Panc1 (cell line): ENCODE measurements at regions of chr6 and their contacts with region 1.

Region 1: DNA sequence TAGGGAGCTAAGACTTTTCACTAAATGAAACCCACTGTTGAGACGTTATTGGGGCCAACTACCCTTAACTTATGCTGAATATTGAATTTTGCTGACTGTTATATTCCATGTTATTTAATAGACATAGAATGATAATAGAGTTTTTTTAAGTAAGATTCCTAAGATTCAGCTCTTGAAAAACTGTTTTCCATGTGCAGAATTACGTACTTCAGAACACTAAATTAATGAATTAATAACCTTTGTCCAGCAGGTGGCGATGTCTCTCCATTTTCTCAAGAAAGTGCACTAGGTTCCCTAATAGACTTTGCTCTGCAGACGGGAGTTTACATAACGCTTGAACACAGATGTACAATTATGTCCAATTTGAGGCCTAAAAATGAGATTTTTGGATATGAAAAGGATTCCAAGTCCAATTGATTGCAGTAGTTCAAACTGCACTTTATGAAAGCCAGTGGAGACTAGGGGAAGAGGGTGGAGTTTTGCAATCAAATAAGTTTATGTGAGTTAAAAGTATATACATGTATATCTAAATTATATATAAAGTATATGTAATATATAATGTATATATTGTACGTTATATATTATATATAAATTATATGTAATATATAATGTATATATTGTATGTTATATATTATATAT is 282.1 kb downstream of the UST start:
- DNase-seq: peak; percentile 61
- ATAC-seq: peak; percentile 78
- H3K4me3 ChIP-seq: no peak overlapping the region
- H3K27ac ChIP-seq: no peak overlapping the region
- H3K4me1 ChIP-seq: peaks cover 10% of the 10 kb centered on the region
- H3K27me3 ChIP-seq: no peaks in the 10 kb centered on the region; the same call in 1 of the 2 replicates
- CTCF ChIP-seq: peak; percentile 66; the same call in 1 of the 2 replicates

Region 2: GRCh38 chr6:148789948-148790347 is 238.9 kb before region 1 on chr6:
- CTCF ChIA-PET with region 1: interaction called, 10 read pairs
- POLR2A ChIA-PET with region 1: no interaction called
- in situ Hi-C with region 1: no loop called
- intact Hi-C with region 1: no loop called
- DNase-seq: no peak
- ATAC-seq: no peak
- H3K4me3 ChIP-seq: no peak overlapping the region
- H3K27ac ChIP-seq: no peak overlapping the region
- H3K4me1 ChIP-seq: no peaks in the 10 kb centered on the region
- H3K27me3 ChIP-seq: no peaks in the 10 kb centered on the region; the same call in 1 of the 2 replicates
- CTCF ChIP-seq: no peak

Region 3: GRCh38 chr6:149153100-149153499 is 124.2 kb after region 1 on chr6:
- CTCF ChIA-PET with region 1: no interaction called
- POLR2A ChIA-PET with region 1: no interaction called
- in situ Hi-C with region 1: no loop called
- intact Hi-C with region 1: no loop called
- DNase-seq: no peak
- ATAC-seq: no peak
- H3K4me3 ChIP-seq: no peak overlapping the region
- H3K27ac ChIP-seq: no peak overlapping the region
- H3K4me1 ChIP-seq: no peaks in the 10 kb centered on the region
- H3K27me3 ChIP-seq: no peaks in the 10 kb centered on the region; the same call in 1 of the 2 replicates
- CTCF ChIP-seq: no peak

Region 4: GRCh38 chr6:149431905-149432775 is 403.3 kb after region 1 on chr6:
- CTCF ChIA-PET with region 1: interaction called, 8 read pairs
- POLR2A ChIA-PET with region 1: no interaction called
- in situ Hi-C with region 1: no loop called
- intact Hi-C with region 1: loop called (anchors 1 kb)
- DNase-seq: peak; percentile 72
- ATAC-seq: peak; percentile 98
- H3K4me3 ChIP-seq: no peak overlapping the region
- H3K27ac ChIP-seq: no peak overlapping the region
- H3K4me1 ChIP-seq: peaks cover 4% of the 10 kb centered on the region
- H3K27me3 ChIP-seq: no peaks in the 10 kb centered on the region
- CTCF ChIP-seq: peak; percentile 91

Region 5: GRCh38 chr6:149513915-149514314 is 485.0 kb after region 1 on chr6:
- CTCF ChIA-PET with region 1: no interaction called
- POLR2A ChIA-PET with region 1: no interaction called
- in situ Hi-C with region 1: no loop called
- intact Hi-C with region 1: loop called (anchors 2 kb)
- DNase-seq: no peak
- ATAC-seq: no peak
- H3K4me3 ChIP-seq: no peak overlapping the region
- H3K27ac ChIP-seq: no peak overlapping the region
- H3K4me1 ChIP-seq: no peaks in the 10 kb centered on the region
- H3K27me3 ChIP-seq: no peaks in the 10 kb centered on the region
- CTCF ChIP-seq: no peak

Region 6: DNA sequence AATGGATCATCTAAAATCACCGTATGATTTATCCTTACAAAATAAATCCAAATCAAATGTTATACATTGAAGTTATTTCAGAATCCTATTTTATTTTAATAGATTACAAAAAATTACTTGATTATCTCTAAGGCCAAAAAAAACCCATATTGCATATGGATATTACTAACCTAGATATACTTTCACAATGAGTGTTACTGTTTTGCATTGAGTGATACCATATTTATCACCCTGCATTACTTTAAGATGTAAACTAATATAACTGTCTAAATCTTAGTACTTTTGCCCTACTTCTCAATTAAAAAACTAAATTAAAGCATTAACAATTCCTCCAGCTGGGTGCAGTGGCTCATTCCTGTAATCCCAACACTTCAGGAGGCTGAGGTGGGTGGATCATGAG is 505.9 kb after region 1 on chr6:
- CTCF ChIA-PET with region 1: interaction called, 10 read pairs
- POLR2A ChIA-PET with region 1: no interaction called
- in situ Hi-C with region 1: no loop called
- intact Hi-C with region 1: no loop called
- DNase-seq: no peak
- ATAC-seq: no peak
- H3K4me3 ChIP-seq: no peak overlapping the region
- H3K27ac ChIP-seq: no peak overlapping the region
- H3K4me1 ChIP-seq: no peaks in the 10 kb centered on the region
- H3K27me3 ChIP-seq: no peaks in the 10 kb centered on the region
- CTCF ChIP-seq: no peak